ENCODE measurements at regions of chr4 and their contacts with region 1.

Region 1: GRCh38 chr4:74228691-74229640 is 71.0 kb downstream of the MTHFD2L start:
- DNase-seq: peak; percentile 43 to 62
- ATAC-seq: peak in 3 of 4 donors; percentile 69 to 76 (median 72)
- H3K4me3 ChIP-seq: no peak overlapping the region
- H3K27ac ChIP-seq: no peak overlapping the region
- H3K4me1 ChIP-seq: no peaks in the 10 kb centered on the region
- H3K27me3 ChIP-seq: no peaks in the 10 kb centered on the region
- CTCF ChIP-seq: peak; percentile 73

Region 2: DNA sequence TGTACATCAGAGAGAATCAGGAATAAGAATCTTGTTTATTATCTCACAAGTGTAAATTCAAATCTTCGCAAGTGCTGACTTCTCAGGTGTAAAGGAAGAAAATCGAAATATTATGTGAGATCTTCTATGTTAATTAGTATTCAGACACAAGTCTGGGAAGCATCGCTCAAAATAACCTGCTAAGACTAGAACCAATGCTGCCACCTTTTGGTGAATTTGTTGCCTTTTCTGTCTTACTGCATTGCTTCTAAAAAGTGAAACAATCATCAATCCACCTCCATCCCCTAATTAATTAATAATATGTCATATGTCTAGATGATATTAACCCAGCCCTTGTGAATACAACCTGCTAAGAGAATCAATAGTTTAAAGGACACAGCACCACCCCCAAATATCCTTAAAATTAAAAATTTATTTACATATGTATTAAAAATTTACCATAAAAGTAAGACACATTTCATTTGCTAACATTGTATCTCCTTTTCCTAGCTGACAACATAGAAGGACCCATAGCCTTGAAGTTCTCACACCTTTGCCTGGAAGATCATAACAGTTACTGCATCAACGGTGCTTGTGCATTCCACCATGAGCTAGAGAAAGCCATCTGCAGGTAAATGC is 82.8 kb after region 1 on chr4:
- intact Hi-C with region 1: loop called in 1 of 2 experiments (anchors 2 kb)
- DNase-seq: no peak
- ATAC-seq: no peak
- H3K4me3 ChIP-seq: no peak overlapping the region
- H3K27ac ChIP-seq: no peak overlapping the region
- H3K4me1 ChIP-seq: no peaks in the 10 kb centered on the region
- H3K27me3 ChIP-seq: no peaks in the 10 kb centered on the region
- CTCF ChIP-seq: peak; percentile 52

Measured in psoas muscle (tissue), 8 donors.